Spleen (tissue), 13 donors: ENCODE measurements at regions of chr1 and their contacts with region 1.

Region 1: GRCh38 chr1:202117865-202118371 is 4.8 kb upstream of the GPR37L1 start:
- DNase-seq: no peak
- H3K4me3 ChIP-seq: no peak overlapping the region
- H3K27ac ChIP-seq: no peak overlapping the region
- H3K4me1 ChIP-seq: no peaks in the 10 kb centered on the region
- H3K27me3 ChIP-seq: peaks cover 0 to 20% (median 0%) of the 10 kb centered on the region in 7 donors
- CTCF ChIP-seq: no peak
- POLR2A ChIP-seq: no peak

Region 2: DNA sequence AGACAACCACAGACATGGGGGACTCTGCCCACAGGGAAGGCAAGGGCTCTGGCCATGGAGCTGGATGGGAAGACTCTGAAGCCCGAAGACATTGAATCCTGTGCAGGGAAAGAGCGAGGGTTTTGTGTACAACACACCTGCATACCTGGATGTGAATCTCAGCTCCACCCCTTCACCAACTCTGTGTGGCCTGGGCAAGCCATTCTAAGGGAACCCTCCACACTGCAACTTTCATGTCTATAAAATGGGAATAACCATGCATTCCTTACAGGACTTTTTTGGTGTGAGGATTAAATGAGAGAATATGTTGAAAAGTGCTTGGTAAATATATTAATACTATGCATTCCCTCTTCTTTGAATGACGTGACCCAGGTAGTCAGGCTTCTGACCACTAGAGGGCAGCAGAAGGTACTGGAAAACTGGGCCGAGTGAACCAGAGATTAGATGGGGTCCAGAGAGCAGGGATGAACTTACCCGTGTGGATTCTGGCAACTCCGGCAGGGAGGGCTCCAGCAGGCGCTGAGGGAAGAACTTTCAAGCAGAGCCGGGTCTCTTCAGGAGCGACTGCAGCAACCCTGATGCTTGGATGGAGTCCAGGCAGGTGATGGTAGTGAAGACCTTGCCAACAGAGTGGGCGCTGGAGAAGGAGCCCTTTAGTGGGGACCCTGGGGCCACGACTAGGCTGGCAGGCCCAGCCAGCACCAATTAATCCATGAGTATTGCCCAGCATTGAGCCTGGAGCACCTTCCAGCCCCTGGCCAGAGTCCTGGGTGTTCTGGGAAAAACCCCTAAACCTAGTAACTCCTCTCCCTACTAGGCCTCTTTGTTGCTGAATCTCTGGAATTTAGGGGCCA is 108.4 kb before region 1 on chr1:
- intact Hi-C with region 1: loop called (anchors 5 kb)
- DNase-seq: peak; percentile 67
- H3K4me3 ChIP-seq: no peak overlapping the region
- H3K27ac ChIP-seq: no peak overlapping the region
- H3K4me1 ChIP-seq: peaks cover 0 to 9% (median 0%) of the 10 kb centered on the region in 6 donors
- H3K27me3 ChIP-seq: no peaks in the 10 kb centered on the region
- CTCF ChIP-seq: peak; percentile 44 to 89 (median 79)
- POLR2A ChIP-seq: no peak

Region 3: GRCh38 chr1:202184750-202185460 is 67.0 kb after region 1 on chr1:
- intact Hi-C with region 1: no loop called
- DNase-seq: peak; percentile 91
- H3K4me3 ChIP-seq: no peak overlapping the region
- H3K27ac ChIP-seq: no peak overlapping the region
- H3K4me1 ChIP-seq: peaks cover 0 to 14% (median 6%) of the 10 kb centered on the region in 6 donors
- H3K27me3 ChIP-seq: peaks cover 0 to 22% (median 0%) of the 10 kb centered on the region in 7 donors
- CTCF ChIP-seq: peak; percentile 23 to 91 (median 75)
- POLR2A ChIP-seq: no peak